CD4-positive, alpha-beta T cell (primary cell): ENCODE measurements at regions of chr10 and their contacts with region 1.

Region 1: GRCh38 chr10:60816628-60817397 is 38.5 kb downstream of the CDK1 start:
- DNase-seq: peak in 8 of 14 experiments; percentile 2 to 77 (median 24)
- ATAC-seq: peak; percentile 75
- H3K4me3 ChIP-seq: no peak overlapping the region
- H3K4me3 Mint-ChIP-seq: no peak overlapping the region
- H3K27ac ChIP-seq: no peak overlapping the region
- H3K27ac Mint-ChIP-seq: no peak overlapping the region
- H3K4me1 ChIP-seq: no peaks in the 10 kb centered on the region
- H3K4me1 Mint-ChIP-seq: no peaks in the 10 kb centered on the region
- H3K27me3 ChIP-seq: no peaks in the 10 kb centered on the region
- H3K27me3 Mint-ChIP-seq: no peaks in the 10 kb centered on the region
- CTCF ChIP-seq: peak; percentile 87

Region 2: GRCh38 chr10:61047081-61047480 is 230.3 kb after region 1 on chr10:
- CTCF ChIA-PET with region 1: no interaction called
- POLR2A ChIA-PET with region 1: no interaction called
- intact Hi-C with region 1: no loop called
- DNase-seq: no peak
- ATAC-seq: no peak
- H3K4me3 ChIP-seq: no peak overlapping the region
- H3K4me3 Mint-ChIP-seq: no peak overlapping the region
- H3K27ac ChIP-seq: no peak overlapping the region
- H3K27ac Mint-ChIP-seq: no peak overlapping the region
- H3K4me1 ChIP-seq: no peaks in the 10 kb centered on the region
- H3K4me1 Mint-ChIP-seq: no peaks in the 10 kb centered on the region
- H3K27me3 ChIP-seq: no peaks in the 10 kb centered on the region
- H3K27me3 Mint-ChIP-seq: no peaks in the 10 kb centered on the region
- CTCF ChIP-seq: no peak

Region 3: GRCh38 chr10:61284222-61284890 is 467.5 kb after region 1 on chr10:
- CTCF ChIA-PET with region 1: no interaction called
- POLR2A ChIA-PET with region 1: no interaction called
- intact Hi-C with region 1: loop called in 1 of 2 experiments (anchors 2 kb)
- DNase-seq: peak in 3 of 14 experiments; percentile 53 to 65 (median 59)
- ATAC-seq: peak; percentile 31
- H3K4me3 ChIP-seq: peak overlapping the region; percentile 7
- H3K4me3 Mint-ChIP-seq: peak overlapping the region; percentile 74
- H3K27ac ChIP-seq: no peak overlapping the region
- H3K27ac Mint-ChIP-seq: peak overlapping the region; percentile 16
- H3K4me1 ChIP-seq: no peaks in the 10 kb centered on the region
- H3K4me1 Mint-ChIP-seq: peaks cover 26% of the 10 kb centered on the region
- H3K27me3 ChIP-seq: no peaks in the 10 kb centered on the region
- H3K27me3 Mint-ChIP-seq: no peaks in the 10 kb centered on the region
- CTCF ChIP-seq: peak; percentile 93

Region 4: GRCh38 chr10:61733358-61733940 is 916.6 kb after region 1 on chr10:
- CTCF ChIA-PET with region 1: no interaction called
- POLR2A ChIA-PET with region 1: no interaction called
- intact Hi-C with region 1: loop called in 1 of 2 experiments (anchors 5 kb)
- DNase-seq: peak in 3 of 14 experiments; percentile 22 to 30 (median 27)
- ATAC-seq: no peak
- H3K4me3 ChIP-seq: no peak overlapping the region
- H3K4me3 Mint-ChIP-seq: no peak overlapping the region
- H3K27ac ChIP-seq: no peak overlapping the region
- H3K27ac Mint-ChIP-seq: no peak overlapping the region
- H3K4me1 ChIP-seq: no peaks in the 10 kb centered on the region
- H3K4me1 Mint-ChIP-seq: no peaks in the 10 kb centered on the region
- H3K27me3 ChIP-seq: peaks cover 0 to 14% of the 10 kb centered on the region in 2 experiments
- H3K27me3 Mint-ChIP-seq: peaks cover 47% of the 10 kb centered on the region
- CTCF ChIP-seq: peak; percentile 65

Region 5: GRCh38 chr10:61835069-61835945 is 1018.5 kb after region 1 on chr10:
- CTCF ChIA-PET with region 1: no interaction called
- POLR2A ChIA-PET with region 1: no interaction called
- intact Hi-C with region 1: loop called in 1 of 2 experiments (anchors 10 kb)
- DNase-seq: peak in 3 of 14 experiments; percentile 41 to 47 (median 41)
- ATAC-seq: no peak
- H3K4me3 ChIP-seq: no peak overlapping the region
- H3K4me3 Mint-ChIP-seq: no peak overlapping the region
- H3K27ac ChIP-seq: no peak overlapping the region
- H3K27ac Mint-ChIP-seq: no peak overlapping the region
- H3K4me1 ChIP-seq: no peaks in the 10 kb centered on the region
- H3K4me1 Mint-ChIP-seq: peaks cover 14% of the 10 kb centered on the region
- H3K27me3 ChIP-seq: no peaks in the 10 kb centered on the region
- H3K27me3 Mint-ChIP-seq: no peaks in the 10 kb centered on the region
- CTCF ChIP-seq: peak; percentile 48